Heart left ventricle (tissue), 16 donors: ENCODE measurements at regions of chr5 and their contacts with region 1.

Region 1: GRCh38 chr5:102740515-102740914 is 14.6 kb upstream of the PAM start:
- DNase-seq: no peak
- ATAC-seq: no peak
- H3K4me3 ChIP-seq: no peak overlapping the region
- H3K27ac ChIP-seq: no peak overlapping the region
- H3K4me1 ChIP-seq: no peaks in the 10 kb centered on the region
- H3K27me3 ChIP-seq: no peaks in the 10 kb centered on the region
- CTCF ChIP-seq: no peak
- POLR2A ChIP-seq: no peak

Region 2: GRCh38 chr5:102691434-102691833 is 49.1 kb before region 1 on chr5:
- intact Hi-C with region 1: loop called in 1 of 10 experiments (anchors 5 kb)
- DNase-seq: no peak
- ATAC-seq: no peak
- H3K4me3 ChIP-seq: no peak overlapping the region
- H3K27ac ChIP-seq: no peak overlapping the region
- H3K4me1 ChIP-seq: no peaks in the 10 kb centered on the region
- H3K27me3 ChIP-seq: no peaks in the 10 kb centered on the region
- CTCF ChIP-seq: no peak
- POLR2A ChIP-seq: no peak